ENCODE measurements at regions of chr19 and their contacts with region 1.

Region 1: DNA sequence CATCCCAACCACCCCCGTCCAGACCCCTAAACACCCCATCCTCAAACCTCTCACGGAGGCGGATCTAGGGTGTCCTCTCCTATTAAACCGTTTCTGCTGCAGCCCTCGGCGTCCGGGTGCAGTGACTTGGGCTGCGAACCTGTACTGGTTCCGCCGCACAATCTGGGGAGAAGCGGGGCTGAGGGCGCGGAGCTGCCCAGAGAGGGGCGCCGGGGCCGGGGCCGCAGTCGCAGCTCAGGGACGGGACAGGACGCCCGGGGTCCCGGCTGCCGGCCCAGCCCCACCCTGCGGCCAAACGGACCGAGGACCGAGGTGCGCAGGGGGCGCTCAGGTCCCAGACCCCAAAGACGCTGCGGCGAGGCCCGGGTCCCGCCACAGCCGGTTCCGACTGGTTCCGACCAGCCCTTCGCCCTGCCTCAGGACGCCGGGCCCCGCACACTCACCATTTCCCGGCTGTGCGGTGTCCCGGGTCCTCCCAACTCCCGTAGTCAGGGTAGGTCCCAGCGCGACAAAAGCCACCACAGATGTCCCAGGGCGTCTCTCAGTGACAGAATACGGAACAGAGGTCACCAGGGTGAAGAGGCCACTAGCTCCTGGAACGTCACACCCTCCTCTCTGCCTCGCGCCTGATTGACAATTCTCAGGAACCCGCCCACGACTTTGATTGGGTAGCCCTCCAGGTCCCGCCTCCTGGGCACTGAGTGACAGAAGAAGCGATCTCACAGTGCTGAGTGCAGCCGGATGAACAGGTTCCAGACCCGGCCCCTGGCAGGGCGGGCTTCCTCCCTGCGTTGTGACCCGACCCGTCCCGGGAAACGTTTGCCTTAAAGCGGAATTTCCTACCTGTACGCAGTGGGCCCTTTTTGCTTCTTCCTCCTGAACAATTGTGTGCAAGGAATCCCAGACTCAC is at the start of gene ZNF44:
- DNase-seq: peak; percentile 96 to 100 (median 98)

Region 2: GRCh38 chr19:12162882-12163806 is 131.4 kb before region 1 on chr19 and contains the start of gene ZNF136:
- intact Hi-C with region 1: loop called (anchors 1 kb)
- DNase-seq: peak; percentile 86 to 99 (median 94)

Region 3: GRCh38 chr19:12379749-12380737 is 85.5 kb after region 1 on chr19:
- intact Hi-C with region 1: no loop called
- DNase-seq: no peak